ENCODE measurements at regions of chr12 and their contacts with region 1.

Region 1: DNA sequence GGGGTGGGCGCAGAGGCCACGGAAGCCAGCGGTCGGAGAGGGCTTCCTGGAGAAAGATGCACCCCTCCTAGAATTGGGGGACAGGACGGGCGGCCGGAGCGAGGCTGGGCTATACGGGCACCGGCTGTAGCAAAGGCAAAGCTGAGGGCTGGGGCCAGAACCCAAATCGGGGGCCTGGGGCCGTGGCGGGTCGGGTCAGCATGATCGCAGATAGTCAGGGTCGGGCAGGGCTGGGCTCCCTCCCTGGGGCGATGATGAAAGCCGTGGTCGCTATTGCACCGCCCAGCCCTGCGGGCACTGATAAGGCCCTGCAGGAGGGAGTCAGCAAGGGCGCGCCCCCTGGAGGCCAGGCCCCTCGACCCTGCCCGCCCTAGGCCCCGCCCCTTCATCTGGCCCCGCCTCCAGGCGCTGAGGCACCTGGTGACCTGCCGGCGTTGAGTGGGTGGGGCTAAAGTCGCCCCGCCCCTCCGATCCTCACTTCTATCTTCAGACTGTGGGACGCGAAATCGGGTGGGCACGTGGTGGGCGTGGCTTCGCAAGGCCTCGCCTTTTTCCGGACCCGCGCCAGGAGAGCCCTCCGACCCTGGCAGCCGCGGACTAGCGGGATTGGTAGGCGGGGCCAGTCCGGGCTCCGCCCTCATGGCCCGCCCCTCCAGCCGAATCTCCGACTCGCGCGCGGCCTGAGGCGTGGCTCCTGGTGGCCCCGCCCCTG is 418 bp upstream of the SH2B3 start:
- DNase-seq: peak; percentile 81
- H3K4me3 ChIP-seq: peak overlapping the region; percentile 32 to 99 (median 75)
- H3K27ac ChIP-seq: no peak overlapping the region
- H3K4me1 ChIP-seq: peaks cover 40% of the 10 kb centered on the region
- H3K27me3 ChIP-seq: no peaks in the 10 kb centered on the region
- CTCF ChIP-seq: peak; percentile 10 to 53

Region 2: DNA sequence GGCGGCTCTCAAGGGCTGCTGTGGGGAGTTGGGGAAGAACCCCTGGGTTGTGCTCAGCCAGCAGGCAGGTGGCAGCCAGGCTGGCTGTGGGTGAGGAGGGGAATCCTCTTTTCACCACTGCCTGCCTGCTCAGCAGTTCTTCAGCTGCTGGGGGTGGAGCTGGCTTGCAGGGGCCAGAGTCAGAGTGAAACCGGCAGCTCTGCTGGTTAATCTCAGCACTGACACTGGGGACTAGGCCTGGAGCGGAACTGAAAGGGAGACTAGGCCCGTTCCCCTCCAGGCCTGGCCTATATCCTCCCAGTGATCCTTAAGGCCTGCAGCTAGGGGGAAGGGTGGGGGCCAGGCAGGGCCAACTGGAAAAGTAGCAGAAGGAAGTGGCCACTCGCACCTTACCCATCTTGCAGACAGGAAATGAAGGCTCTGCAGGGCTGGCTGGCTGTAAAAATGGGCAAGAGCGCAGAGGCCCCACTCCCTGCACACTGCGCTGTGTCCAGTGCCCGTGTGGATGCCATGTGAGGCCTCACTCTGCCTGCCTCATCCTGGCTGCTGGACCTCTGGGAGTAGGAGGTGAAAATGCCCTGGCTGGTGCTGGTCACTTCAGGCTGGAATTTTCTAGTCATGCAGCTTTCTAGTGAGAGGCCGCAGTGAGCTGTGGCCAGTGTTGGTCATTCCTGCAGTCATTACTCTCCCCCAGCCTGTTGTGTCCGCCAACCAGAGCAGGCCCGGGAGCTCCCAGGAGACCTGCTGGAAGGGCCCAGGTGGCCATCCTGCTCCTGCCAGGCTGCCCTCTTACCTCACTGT is 39.8 kb after region 1 on chr12:
- CTCF ChIA-PET with region 1: interaction called, 5 read pairs
- dilution Hi-C with region 1: no loop called
- in situ Hi-C with region 1: no loop called
- intact Hi-C with region 1: loop called (anchors 5 kb)
- DNase-seq: no peak
- H3K4me3 ChIP-seq: no peak overlapping the region
- H3K27ac ChIP-seq: no peak overlapping the region
- H3K4me1 ChIP-seq: peaks cover 37% of the 10 kb centered on the region
- H3K27me3 ChIP-seq: no peaks in the 10 kb centered on the region
- CTCF ChIP-seq: no peak

Region 3: GRCh38 chr12:111616177-111616623 is 210.9 kb after region 1 on chr12:
- CTCF ChIA-PET with region 1: interaction called, 35 read pairs
- dilution Hi-C with region 1: no loop called
- in situ Hi-C with region 1: no loop called
- intact Hi-C with region 1: no loop called
- DNase-seq: no peak
- H3K4me3 ChIP-seq: no peak overlapping the region
- H3K27ac ChIP-seq: no peak overlapping the region
- H3K4me1 ChIP-seq: no peaks in the 10 kb centered on the region
- H3K27me3 ChIP-seq: no peaks in the 10 kb centered on the region
- CTCF ChIP-seq: no peak